Activated naive CD4-positive, alpha-beta T cell treated with anti-CD3 and anti-CD28 coated beads for 36 hours (primary cell): ENCODE measurements at regions of chr4 and their contacts with region 1.

Region 1: DNA sequence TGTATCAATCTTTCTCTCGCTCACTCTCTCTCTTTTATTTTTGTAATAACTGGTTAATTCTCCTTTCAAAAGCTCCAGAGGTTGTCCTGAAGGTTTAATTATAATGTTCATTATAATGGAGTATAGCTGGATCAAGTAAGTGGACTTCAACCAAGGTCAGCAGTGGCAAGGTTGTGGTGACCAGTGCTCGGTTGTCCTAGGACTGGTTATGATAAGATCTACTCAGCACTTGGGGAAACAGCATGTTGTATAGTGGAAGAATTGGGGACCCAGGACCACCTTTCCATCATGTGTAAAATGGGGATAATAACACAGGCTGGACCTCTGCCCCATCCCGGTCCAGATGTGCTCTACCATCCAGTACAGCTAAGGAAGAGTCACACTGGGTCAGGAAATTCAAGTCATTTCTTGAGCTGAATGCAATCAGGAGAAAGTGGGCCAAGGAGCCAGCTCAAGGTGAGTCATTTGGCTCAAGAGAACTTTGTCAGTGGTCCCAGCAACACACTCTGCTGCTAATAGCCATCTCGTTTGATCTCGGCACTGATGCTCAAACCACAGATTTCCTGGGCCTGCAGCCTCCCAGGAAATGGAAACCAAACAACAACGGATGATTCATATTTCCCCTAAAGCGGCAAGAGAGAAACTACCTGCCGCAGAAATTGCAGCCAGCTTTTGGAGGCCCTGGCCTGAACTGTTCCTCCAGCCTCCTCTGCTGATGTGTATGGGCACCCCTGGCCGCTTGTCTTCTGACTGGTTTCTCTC is 123.6 kb upstream of the RBPJ start:
- DNase-seq: peak; percentile 86
- H3K4me3 Mint-ChIP-seq: peak overlapping the region; percentile 0
- H3K27ac Mint-ChIP-seq: peak overlapping the region; percentile 88
- H3K4me1 Mint-ChIP-seq: peaks cover 72% of the 10 kb centered on the region
- H3K27me3 Mint-ChIP-seq: peaks cover 1% of the 10 kb centered on the region

Region 2: GRCh38 chr4:25862411-25863346 is 334.5 kb before region 1 on chr4 and contains the start of gene SEL1L3:
- CTCF ChIA-PET with region 1: no interaction called
- intact Hi-C with region 1: loop called (anchors 2 kb)
- DNase-seq: peak; percentile 53
- H3K4me3 Mint-ChIP-seq: peak within 1 kb of the TSS; percentile 93
- H3K27ac Mint-ChIP-seq: peak within 1 kb of the TSS; percentile 92
- H3K4me1 Mint-ChIP-seq: peaks cover 33% of the 10 kb centered on the region
- H3K27me3 Mint-ChIP-seq: no peaks in the 10 kb centered on the region
- total RNA-seq, gene SEL1L3: 32.3 to 38.2 TPM

Region 3: DNA sequence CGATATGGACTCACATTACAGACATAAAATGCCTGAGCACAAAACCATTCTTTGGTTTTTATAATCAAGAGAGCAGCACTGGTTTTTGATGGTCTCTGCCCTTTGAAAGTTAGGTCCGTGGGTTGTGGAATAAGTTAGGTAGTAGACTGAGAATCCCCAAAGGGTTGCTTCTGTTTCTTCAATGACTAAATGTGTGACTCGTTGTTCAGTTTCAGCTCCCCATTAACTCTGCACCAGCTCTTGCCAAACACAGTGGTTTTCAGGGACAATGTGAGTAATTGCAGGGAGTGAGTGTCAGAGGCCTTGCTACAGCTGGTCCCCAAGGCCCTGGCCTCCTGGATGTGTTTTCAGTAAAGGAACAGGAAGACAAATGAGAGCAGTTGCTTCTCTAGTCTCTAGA is 258.4 kb before region 1 on chr4:
- CTCF ChIA-PET with region 1: no interaction called
- intact Hi-C with region 1: loop called (anchors 5 kb)
- DNase-seq: peak; percentile 68
- H3K4me3 Mint-ChIP-seq: no peak overlapping the region
- H3K27ac Mint-ChIP-seq: peak overlapping the region; percentile 5
- H3K4me1 Mint-ChIP-seq: peaks cover 20% of the 10 kb centered on the region
- H3K27me3 Mint-ChIP-seq: peaks cover 15% of the 10 kb centered on the region

Region 4: DNA sequence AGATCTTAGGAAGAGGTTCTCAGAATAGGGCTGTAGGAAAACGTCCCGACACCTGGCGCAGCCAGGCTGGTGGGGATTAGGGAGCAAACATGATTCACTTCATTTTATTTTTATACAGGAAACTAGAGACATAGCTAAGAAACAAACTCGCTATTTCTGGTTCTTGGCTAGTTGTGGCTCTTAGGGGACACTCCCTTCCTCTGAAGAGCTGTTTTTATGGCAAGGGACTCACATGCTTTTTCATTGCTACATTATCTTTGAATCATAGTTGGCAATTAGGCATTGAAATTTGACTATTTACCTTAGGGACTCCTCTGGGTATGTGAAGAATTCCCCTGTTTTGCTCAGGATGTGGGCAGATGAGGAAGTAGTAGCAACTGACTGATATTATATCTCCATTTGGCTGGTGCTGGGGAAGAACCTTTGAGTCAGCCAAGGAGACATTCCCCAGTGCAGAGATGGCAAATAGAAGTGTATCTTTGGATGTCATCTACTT is 108.7 kb before region 1 on chr4:
- CTCF ChIA-PET with region 1: interaction called, 6 read pairs
- intact Hi-C with region 1: loop called (anchors 1 kb)
- DNase-seq: peak; percentile 75
- H3K4me3 Mint-ChIP-seq: peak overlapping the region; percentile 19
- H3K27ac Mint-ChIP-seq: peak overlapping the region; percentile 93
- H3K4me1 Mint-ChIP-seq: peaks cover 47% of the 10 kb centered on the region
- H3K27me3 Mint-ChIP-seq: peaks cover 6% of the 10 kb centered on the region

Region 5: DNA sequence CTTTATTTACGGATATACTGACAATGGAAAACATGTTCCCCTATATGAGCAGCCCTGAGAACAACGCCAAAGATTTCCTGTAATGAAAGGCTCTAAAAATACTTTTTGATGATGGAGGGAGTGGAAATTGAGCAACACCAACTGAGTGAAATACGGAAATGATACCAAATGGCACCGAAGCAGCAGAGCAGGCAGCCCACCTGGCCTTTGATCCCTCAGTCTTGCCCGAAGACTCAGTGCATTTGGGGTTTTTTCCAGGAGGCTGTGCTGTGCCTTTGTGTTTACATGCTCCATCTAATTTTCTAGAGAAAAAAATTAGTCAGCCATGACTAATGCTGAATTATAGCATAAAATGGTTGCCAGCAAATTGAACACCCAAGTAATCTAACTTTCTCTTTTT is 46.3 kb before region 1 on chr4:
- CTCF ChIA-PET with region 1: no interaction called
- intact Hi-C with region 1: no loop called
- DNase-seq: peak; percentile 54
- H3K4me3 Mint-ChIP-seq: no peak overlapping the region
- H3K27ac Mint-ChIP-seq: peak overlapping the region; percentile 75
- H3K4me1 Mint-ChIP-seq: peaks cover 16% of the 10 kb centered on the region
- H3K27me3 Mint-ChIP-seq: peaks cover 10% of the 10 kb centered on the region

Region 6: GRCh38 chr4:26410385-26411293 is 213.4 kb after region 1 on chr4:
- CTCF ChIA-PET with region 1: interaction called, 4 read pairs
- intact Hi-C with region 1: loop called (anchors 5 kb)
- DNase-seq: peak; percentile 49
- H3K4me3 Mint-ChIP-seq: no peak overlapping the region
- H3K27ac Mint-ChIP-seq: no peak overlapping the region
- H3K4me1 Mint-ChIP-seq: peaks cover 5% of the 10 kb centered on the region
- H3K27me3 Mint-ChIP-seq: no peaks in the 10 kb centered on the region

Region 7: DNA sequence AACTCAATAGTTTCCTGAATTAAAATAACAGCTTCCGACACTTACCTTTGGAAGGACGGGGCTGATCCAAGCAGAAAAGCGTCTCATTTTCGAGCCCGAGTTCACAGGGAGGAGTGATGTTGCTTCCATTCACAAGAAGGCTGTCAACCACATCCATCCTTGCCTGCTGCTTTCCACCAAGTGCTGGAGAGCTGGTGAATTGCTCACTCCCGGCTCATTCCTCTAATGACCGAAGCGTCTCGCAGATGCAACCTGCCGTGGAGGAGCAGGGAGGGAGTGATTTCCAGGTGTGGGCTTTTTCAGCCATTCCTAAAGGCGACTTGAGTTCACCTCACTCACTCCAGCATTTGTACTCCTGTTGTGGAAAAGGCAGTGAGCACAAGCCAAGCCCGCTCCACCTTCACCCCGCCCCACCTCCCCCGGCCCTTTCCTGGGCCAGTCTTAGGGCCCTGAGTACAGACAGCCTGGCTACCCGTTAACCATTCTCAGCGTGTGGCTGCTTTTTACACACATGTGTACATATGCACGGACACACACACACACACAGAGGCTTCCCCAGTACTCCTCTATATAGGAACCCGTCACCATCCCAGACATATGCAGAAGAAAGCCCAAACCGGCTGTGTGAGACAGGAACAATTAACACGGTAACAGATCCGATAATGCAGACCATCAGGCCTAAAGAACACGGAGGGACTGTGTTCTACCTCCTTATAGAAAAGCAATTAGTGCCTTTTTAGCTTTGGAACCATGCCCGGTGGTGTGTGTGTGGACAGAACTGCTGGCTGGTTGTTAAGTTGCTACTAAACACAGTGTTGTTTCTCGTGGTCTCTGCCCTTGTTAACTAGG is 293.1 kb after region 1 on chr4 and contains the start of gene CCKAR:
- CTCF ChIA-PET with region 1: no interaction called
- intact Hi-C with region 1: no loop called
- DNase-seq: no peak
- H3K4me3 Mint-ChIP-seq: no peak within 1 kb of the TSS
- H3K27ac Mint-ChIP-seq: no peak within 1 kb of the TSS
- H3K4me1 Mint-ChIP-seq: no peaks in the 10 kb centered on the region
- H3K27me3 Mint-ChIP-seq: peaks cover 11% of the 10 kb centered on the region
- total RNA-seq, gene CCKAR: not detected

Region 8: GRCh38 chr4:26992657-26993361 is 795.6 kb after region 1 on chr4:
- CTCF ChIA-PET with region 1: no interaction called
- intact Hi-C with region 1: loop called (anchors 5 kb)
- DNase-seq: peak; percentile 47
- H3K4me3 Mint-ChIP-seq: no peak overlapping the region
- H3K27ac Mint-ChIP-seq: no peak overlapping the region
- H3K4me1 Mint-ChIP-seq: peaks cover 26% of the 10 kb centered on the region
- H3K27me3 Mint-ChIP-seq: no peaks in the 10 kb centered on the region